ENCODE measurements at regions of chr1 and their contacts with region 1.

Region 1: DNA sequence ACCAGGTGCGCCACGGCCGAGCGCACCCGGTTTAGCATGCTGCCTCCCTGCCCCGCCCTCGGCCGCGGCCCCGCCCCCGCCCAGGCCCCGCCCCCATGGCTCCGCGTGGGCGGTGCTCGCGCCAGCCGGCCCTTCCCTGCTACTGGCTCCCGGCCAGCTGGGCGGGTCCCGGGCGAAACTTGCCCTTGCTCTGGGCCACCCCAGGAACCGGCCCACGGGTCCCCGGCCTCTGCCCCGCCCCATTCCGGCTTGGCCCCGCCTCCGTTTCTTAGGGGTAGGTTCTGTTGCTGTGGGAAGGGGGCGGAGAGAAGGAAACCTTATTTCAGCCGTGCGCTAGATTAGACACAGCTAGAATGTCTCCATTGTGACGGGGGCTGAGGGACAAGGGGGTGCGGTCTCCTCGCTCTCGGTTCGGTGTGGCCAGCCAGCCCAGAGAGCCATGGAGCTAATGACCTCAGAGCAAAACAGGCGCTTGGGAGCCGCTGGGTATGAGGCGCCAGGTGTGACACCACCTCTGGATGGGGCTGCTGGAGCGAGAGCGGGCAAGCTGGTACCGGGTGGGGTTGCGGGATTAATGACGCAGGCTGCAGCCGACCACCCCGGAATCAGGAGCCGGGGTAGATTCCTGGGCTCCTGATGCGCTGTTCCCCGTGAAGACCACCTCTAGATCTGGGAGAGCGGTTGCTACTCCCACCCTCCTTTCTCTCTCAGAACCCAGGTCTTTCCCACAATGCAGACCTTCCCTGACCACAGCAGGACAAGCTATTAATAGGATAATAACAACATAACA is at the start of gene PPM1J:
- DNase-seq: peak; percentile 50
- H3K4me3 ChIP-seq: peak within 1 kb of the TSS; percentile 60
- CTCF ChIP-seq: no peak

Region 2: DNA sequence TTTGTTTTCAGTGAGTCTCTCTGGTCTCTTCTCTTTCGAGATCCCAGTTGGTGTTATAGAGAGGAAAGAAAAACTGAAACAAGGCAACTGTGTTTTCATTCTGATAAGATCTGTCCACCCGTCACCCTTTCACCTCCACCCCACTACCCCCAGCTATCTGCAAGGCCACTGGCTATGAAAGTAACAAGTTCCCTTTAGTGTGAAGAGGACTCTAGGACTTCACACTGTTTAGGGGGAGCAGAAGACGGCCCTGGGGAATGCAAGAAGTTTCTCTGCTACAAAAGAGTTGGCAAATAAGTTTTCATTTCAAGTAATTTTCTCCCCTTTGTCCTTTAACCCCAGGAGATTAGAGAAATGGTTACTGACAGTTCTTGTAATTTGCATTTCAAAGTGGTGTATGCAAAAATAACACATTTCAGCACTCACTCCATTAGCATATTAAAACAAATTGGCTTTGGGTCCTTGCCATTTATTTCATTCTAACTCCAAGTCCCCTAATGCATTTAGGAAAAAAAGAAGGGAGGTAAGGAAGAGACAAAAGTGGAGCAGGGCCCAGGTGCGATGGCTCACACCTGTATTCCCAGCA is 79.3 kb after region 1 on chr1:
- in situ Hi-C with region 1: loop called (anchors 5 kb)
- DNase-seq: no peak
- H3K4me3 ChIP-seq: no peak overlapping the region
- CTCF ChIP-seq: no peak

Region 3: GRCh38 chr1:113042285-113043143 is 327.1 kb after region 1 on chr1:
- in situ Hi-C with region 1: loop called (anchors 5 kb)
- DNase-seq: peak; percentile 81
- H3K4me3 ChIP-seq: no peak overlapping the region
- CTCF ChIP-seq: peak; percentile 49